ENCODE measurements at regions of chr10 and their contacts with region 1.

Region 1: DNA sequence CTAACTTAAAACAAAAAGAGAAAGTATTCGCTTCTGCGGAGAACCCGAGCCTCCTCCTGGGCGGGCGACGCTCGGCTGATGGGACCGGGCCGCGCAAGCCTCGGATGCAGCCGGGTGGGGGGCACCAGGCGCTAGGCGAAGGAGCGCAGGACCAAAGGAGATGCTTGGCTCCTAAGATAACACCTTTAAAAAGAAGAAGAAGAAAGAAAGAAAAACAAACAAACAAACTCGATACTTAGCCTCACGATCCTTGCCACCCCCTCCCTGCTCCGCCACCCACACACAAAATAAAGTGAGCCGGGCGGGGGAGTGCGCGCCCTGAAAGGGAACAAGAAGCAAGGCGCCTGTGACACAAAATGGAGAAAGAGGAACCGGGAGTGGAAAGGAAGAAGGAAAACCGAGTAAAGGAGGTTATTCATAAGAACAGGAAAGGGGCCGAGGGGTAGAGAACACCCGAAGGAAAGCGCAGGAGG is 34.0 kb upstream of the EBLN1 start:
- DNase-seq: peak; percentile 79
- H3K4me3 ChIP-seq: peak overlapping the region; percentile 61 to 86 (median 74)
- H3K27ac ChIP-seq: peak overlapping the region; percentile 94 to 97 (median 96)
- H3K4me1 ChIP-seq: peaks cover 0 to 10% (median 5%) of the 10 kb centered on the region in 4 donors
- H3K27me3 ChIP-seq: no peaks in the 10 kb centered on the region
- CTCF ChIP-seq: no peak
- EP300 ChIP-seq: no peak
- POLR2A ChIP-seq: no peak

Region 2: DNA sequence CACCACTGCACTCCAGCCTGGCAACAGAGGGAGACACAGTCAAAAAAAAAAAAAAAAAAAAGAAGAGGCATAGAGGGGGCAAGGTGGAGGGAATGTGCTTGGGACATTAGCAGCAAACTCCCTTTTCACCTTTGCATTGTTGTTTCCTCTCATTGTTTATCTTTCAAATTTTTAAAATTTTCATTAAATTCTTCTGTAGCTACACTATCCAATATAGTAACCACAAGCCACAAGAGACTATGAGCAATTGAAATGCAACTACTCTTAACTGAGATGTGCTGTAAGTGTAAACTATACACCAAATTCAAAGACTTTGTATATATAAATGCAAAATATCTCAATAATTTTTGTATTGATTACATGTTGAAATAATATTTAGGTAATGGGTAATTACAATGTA is 77.3 kb before region 1 on chr10:
- intact Hi-C with region 1: no loop called
- DNase-seq: no peak
- H3K4me3 ChIP-seq: no peak overlapping the region
- H3K27ac ChIP-seq: no peak overlapping the region
- H3K4me1 ChIP-seq: no peaks in the 10 kb centered on the region
- H3K27me3 ChIP-seq: no peaks in the 10 kb centered on the region
- CTCF ChIP-seq: no peak
- EP300 ChIP-seq: no peak
- POLR2A ChIP-seq: no peak

Region 3: GRCh38 chr10:22210277-22210676 is 41.5 kb before region 1 on chr10:
- intact Hi-C with region 1: no loop called
- DNase-seq: no peak
- H3K4me3 ChIP-seq: no peak overlapping the region
- H3K27ac ChIP-seq: no peak overlapping the region
- H3K4me1 ChIP-seq: no peaks in the 10 kb centered on the region
- H3K27me3 ChIP-seq: no peaks in the 10 kb centered on the region
- CTCF ChIP-seq: no peak
- EP300 ChIP-seq: no peak
- POLR2A ChIP-seq: no peak

Region 4: DNA sequence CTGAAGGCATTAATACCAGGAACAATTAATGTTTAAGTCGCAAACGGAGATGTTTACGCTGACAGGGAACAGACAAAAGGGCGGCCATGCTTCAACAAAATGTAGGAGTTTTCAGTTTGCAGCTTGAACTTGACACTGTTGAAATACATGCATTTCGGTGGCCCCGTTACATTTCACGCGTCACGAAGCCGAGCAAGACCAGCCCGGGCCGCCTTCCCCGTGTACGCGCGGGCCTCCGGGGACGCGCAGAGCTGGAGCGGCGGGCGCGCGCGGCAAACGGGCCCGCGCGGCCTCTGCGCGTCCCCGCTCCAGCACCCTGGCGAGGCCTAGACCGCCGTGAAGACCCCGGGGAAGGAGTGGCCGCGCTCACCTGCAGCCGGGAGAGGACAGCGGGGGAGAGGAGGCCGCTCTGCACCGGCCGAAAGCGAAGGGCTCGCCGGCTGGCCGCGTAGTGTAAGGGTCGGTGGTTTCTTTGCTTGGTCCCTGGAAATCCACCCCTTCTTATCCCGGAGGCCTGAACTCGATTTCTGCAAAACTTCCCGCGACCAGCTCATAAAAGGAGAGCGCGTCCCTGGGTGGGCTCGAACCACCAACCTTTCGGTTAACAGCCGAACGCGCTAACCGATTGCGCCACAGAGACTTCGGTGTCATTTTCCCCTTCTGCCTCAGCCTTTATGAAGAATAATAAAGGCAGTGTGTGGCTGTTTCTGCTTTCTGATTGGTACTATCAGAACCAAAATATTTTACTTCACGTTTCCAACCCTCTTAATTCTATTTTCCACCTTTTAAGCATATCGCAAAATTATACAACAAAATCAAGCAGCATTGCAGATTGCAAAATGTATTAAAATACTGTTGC is 22.6 kb before region 1 on chr10:
- intact Hi-C with region 1: loop called (anchors 1 kb)
- DNase-seq: peak; percentile 93
- H3K4me3 ChIP-seq: peak overlapping the region; percentile 60 to 79 (median 75)
- H3K27ac ChIP-seq: peak overlapping the region; percentile 93 to 96 (median 96)
- H3K4me1 ChIP-seq: peaks cover 0 to 12% (median 7%) of the 10 kb centered on the region in 4 donors
- H3K27me3 ChIP-seq: no peaks in the 10 kb centered on the region
- CTCF ChIP-seq: no peak
- EP300 ChIP-seq: no peak
- POLR2A ChIP-seq: no peak

Region 5: GRCh38 chr10:22445495-22445894 is 193.7 kb after region 1 on chr10:
- intact Hi-C with region 1: no loop called
- DNase-seq: no peak
- H3K4me3 ChIP-seq: no peak overlapping the region
- H3K27ac ChIP-seq: no peak overlapping the region
- H3K4me1 ChIP-seq: no peaks in the 10 kb centered on the region
- H3K27me3 ChIP-seq: peaks cover 0 to 6% (median 0%) of the 10 kb centered on the region in 3 donors
- CTCF ChIP-seq: no peak
- EP300 ChIP-seq: no peak
- POLR2A ChIP-seq: no peak

Region 6: DNA sequence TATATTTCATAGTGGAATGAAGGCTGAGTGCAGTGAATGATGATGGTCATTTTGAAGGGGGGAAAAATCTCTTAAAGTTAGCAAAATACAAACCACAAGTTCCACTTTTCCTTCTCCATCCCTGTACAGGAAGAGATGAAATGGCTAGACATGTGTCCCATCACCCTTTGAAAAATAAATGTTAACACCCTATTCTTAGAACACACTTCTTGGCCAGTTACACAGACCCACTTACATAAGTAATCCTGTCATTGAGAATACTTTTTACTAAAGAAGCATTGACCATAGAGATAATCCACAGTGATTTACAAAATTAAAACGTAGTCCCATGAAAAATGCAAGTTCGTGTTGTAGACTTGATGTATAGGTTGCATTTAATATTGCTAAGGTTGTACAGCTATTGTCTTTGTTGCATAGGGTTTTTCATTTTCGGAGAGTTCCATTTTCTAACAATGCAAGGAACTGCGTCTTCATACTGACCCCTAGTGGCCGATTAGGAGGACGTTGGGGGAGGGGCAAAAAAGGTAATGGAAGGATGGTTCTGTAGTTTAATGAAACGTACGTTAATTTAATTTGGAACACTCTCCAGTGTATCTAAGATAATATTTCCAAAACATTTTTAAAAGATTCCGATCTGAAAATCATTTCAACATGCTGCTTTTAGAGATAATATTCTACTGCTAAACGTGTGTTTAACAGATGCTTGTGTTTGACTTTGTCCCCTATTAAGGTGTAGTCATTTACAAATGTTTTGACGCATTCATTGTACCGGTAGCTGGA is 737.0 kb after region 1 on chr10:
- intact Hi-C with region 1: loop called (anchors 10 kb)
- DNase-seq: peak; percentile 73
- H3K4me3 ChIP-seq: no peak overlapping the region
- H3K27ac ChIP-seq: no peak overlapping the region
- H3K4me1 ChIP-seq: peaks cover 0 to 11% (median 4%) of the 10 kb centered on the region in 4 donors
- H3K27me3 ChIP-seq: no peaks in the 10 kb centered on the region
- CTCF ChIP-seq: peak; percentile 78 to 89 (median 85)
- EP300 ChIP-seq: no peak
- POLR2A ChIP-seq: no peak